GM18951 (cell line): ENCODE measurements at regions of chr1 and their contacts with region 1.

Region 1: DNA sequence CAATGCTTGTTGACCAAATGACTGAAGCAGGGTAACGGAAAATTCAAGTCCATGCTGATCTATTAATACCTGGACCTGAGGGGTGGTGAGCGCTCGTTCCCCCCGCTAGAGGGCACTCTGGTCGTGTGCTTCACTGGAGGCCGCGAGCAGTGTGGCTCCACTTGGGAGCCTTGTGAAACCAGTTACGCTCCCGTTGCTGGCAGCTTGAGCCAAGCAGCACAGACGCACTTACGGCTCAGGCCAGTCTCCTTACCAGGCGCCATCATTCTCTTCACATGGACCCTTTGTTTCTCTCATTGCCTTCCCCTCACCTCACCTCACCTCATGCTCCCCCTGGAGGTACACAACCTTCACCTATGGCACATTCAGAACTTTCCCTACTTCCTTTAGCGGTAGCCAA is 49.7 kb upstream of the TSPAN2 start:
- POLR2A ChIP-seq: no peak

Region 2: DNA sequence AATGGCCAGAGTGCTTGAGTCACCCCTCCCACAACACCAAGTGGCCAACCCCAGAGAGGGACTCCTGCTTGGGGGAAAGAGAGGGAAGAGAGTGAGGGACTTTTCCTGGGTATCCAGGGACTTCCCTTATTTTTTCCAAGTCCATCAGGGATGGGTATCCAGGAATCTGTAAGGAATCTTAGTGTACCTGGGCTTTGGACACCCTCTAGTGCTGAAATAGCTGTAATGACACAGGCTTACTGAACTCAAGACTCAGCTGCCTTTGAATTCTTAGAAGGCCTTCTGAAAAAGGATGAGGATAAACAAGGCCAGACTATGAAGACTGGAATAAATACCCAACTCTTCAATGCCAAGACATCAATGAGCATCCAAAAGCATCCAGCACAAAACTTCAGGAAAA is 97.3 kb before region 1 on chr1:
- in situ Hi-C with region 1: no loop called
- POLR2A ChIP-seq: no peak

Region 3: GRCh38 chr1:115089420-115090185 is 49.4 kb before region 1 on chr1 and contains the start of gene TSPAN2:
- in situ Hi-C with region 1: no loop called
- POLR2A ChIP-seq: no peak

Region 4: GRCh38 chr1:115469703-115470476 is 330.9 kb after region 1 on chr1:
- in situ Hi-C with region 1: loop called (anchors 25 kb)
- POLR2A ChIP-seq: no peak

Region 5: GRCh38 chr1:115595279-115596079 is 456.5 kb after region 1 on chr1:
- in situ Hi-C with region 1: loop called (anchors 10 kb)
- POLR2A ChIP-seq: no peak

Region 6: GRCh38 chr1:115771847-115772457 is 633.0 kb after region 1 on chr1:
- in situ Hi-C with region 1: loop called (anchors 25 kb)
- POLR2A ChIP-seq: no peak